ENCODE measurements at regions of chr5 and their contacts with region 1.

Region 1: DNA sequence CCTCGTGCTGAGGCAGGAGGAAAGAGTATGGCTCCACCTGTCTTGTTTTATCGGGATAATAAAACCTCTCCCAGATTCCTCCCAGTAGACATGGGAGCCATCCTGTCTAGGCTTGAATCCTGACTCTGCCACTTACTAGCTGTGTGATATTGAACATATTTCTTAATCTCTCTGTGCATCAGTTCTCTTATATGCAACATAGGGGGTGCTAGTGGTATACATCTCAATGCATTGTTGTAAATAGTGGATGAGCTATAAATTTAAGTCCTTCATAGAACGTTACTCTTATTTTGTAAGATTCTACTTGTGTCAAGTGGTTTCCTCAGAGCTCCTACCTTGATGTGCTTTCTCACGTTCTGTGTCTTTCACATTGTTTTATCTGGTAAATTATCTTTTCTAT is 417.7 kb upstream of the POU5F2 start:
- DNase-seq: no peak
- ATAC-seq: no peak
- H3K4me3 ChIP-seq: no peak overlapping the region
- H3K27ac ChIP-seq: no peak overlapping the region
- H3K4me1 ChIP-seq: peaks cover 2% of the 10 kb centered on the region
- H3K27me3 ChIP-seq: no peaks in the 10 kb centered on the region
- CTCF ChIP-seq: peak; percentile 29
- POLR2A ChIP-seq: no peak
- RAD21 ChIP-seq: peak; percentile 42; the same call in 1 of the 2 replicates

Region 2: GRCh38 chr5:93899026-93899600 is 260.0 kb before region 1 on chr5:
- CTCF ChIA-PET with region 1: no interaction called
- POLR2A ChIA-PET with region 1: no interaction called
- dilution Hi-C with region 1: no loop called
- in situ Hi-C with region 1: no loop called
- intact Hi-C with region 1: no loop called
- DNase-seq: no peak
- ATAC-seq: 0 out of 2 replicates have a peak, but pooled peaks have one; percentile 37
- H3K4me3 ChIP-seq: no peak overlapping the region
- H3K27ac ChIP-seq: no peak overlapping the region
- H3K4me1 ChIP-seq: no peaks in the 10 kb centered on the region
- H3K27me3 ChIP-seq: no peaks in the 10 kb centered on the region
- CTCF ChIP-seq: peak; percentile 36; the same call in 1 of the 2 replicates
- POLR2A ChIP-seq: no peak
- RAD21 ChIP-seq: no peak

Region 3: GRCh38 chr5:93915142-93915553 is 244.0 kb before region 1 on chr5:
- CTCF ChIA-PET with region 1: no interaction called
- POLR2A ChIA-PET with region 1: no interaction called
- dilution Hi-C with region 1: no loop called
- in situ Hi-C with region 1: no loop called
- intact Hi-C with region 1: loop called (anchors 5 kb)
- DNase-seq: peak; percentile 73
- ATAC-seq: peak; percentile 56; the same call in 1 of the 2 replicates
- H3K4me3 ChIP-seq: no peak overlapping the region
- H3K27ac ChIP-seq: no peak overlapping the region
- H3K4me1 ChIP-seq: no peaks in the 10 kb centered on the region
- H3K27me3 ChIP-seq: no peaks in the 10 kb centered on the region
- CTCF ChIP-seq: peak; percentile 69
- POLR2A ChIP-seq: no peak
- RAD21 ChIP-seq: peak; percentile 75

Region 4: GRCh38 chr5:94314460-94315132 is 155.5 kb after region 1 on chr5:
- CTCF ChIA-PET with region 1: no interaction called
- POLR2A ChIA-PET with region 1: no interaction called
- dilution Hi-C with region 1: no loop called
- in situ Hi-C with region 1: no loop called
- intact Hi-C with region 1: loop called (anchors 5 kb)
- DNase-seq: no peak
- ATAC-seq: no peak
- H3K4me3 ChIP-seq: no peak overlapping the region
- H3K27ac ChIP-seq: no peak overlapping the region
- H3K4me1 ChIP-seq: peaks cover 4% of the 10 kb centered on the region
- H3K27me3 ChIP-seq: no peaks in the 10 kb centered on the region
- CTCF ChIP-seq: no peak
- POLR2A ChIP-seq: no peak
- RAD21 ChIP-seq: no peak

Measured in IMR-90 (cell line).